ENCODE measurements at regions of chr3 and their contacts with region 1.

Region 1: GRCh38 chr3:194682694-194683310 is 2.9 kb upstream of the FAM43A start:
- DNase-seq: peak; percentile 40 to 83
- ATAC-seq: peak; percentile 19 to 74 (median 62)
- H3K4me3 ChIP-seq: no peak overlapping the region
- H3K27ac ChIP-seq: peak overlapping the region in 6 of 10 donors; percentile 12 to 54 (median 41)
- H3K4me1 ChIP-seq: peaks cover 10 to 39% (median 29%) of the 10 kb centered on the region in 9 donors
- H3K27me3 ChIP-seq: no peaks in the 10 kb centered on the region
- CTCF ChIP-seq: peak; percentile 67 to 96 (median 91)

Region 2: GRCh38 chr3:194738254-194739093 is 55.7 kb after region 1 on chr3:
- intact Hi-C with region 1: loop called in 1 of 10 experiments (anchors 5 kb)
- DNase-seq: peak; percentile 75 to 79
- ATAC-seq: peak; percentile 89 to 98 (median 96)
- H3K4me3 ChIP-seq: no peak overlapping the region
- H3K27ac ChIP-seq: peak overlapping the region in 6 of 10 donors; percentile 17 to 59 (median 42)
- H3K4me1 ChIP-seq: peaks cover 5 to 46% (median 28%) of the 10 kb centered on the region in 9 donors
- H3K27me3 ChIP-seq: no peaks in the 10 kb centered on the region
- CTCF ChIP-seq: no peak

Region 3: DNA sequence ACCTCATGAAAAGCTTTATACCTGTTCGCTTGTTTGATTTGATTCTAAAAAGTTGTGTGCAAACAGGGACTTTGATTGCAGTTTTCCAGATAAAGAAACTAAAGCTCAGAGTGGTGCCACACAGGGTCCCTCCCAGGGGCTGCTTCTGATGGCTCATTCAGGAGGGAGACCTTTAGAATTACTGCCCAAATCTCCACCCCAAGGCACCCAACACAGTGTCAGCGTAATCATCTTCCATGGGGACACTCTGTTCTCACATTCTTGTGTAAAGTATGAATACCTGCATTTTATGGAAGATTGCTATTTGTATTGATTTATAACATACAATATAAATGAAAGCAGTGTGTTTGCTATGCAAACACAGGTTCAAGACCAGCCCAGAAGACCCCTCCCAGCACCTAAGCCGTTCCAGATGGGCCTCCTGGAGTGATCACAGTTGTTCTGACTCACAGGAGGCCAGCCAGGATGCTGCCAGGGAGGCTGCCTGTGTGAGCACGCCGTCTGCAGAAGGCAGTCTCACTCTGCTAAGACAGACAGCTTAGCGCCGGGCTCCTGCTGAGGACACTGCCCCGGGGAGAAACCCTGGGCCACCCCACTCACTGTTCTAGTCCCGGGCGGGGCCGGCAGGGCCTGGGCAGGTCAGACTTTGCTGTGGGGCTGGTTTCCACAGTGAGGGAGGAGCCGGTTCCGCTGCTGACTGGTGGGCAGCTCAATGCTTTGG is 188.5 kb after region 1 on chr3:
- intact Hi-C with region 1: loop called in 6 of 10 experiments (anchors 5 to 10 kb)
- DNase-seq: peak in 1 of 2 donors; percentile 61
- ATAC-seq: peak; percentile 49 to 76 (median 70)
- H3K4me3 ChIP-seq: no peak overlapping the region
- H3K27ac ChIP-seq: peak overlapping the region in 9 of 10 donors; percentile 40 to 83 (median 75)
- H3K4me1 ChIP-seq: peaks cover 18 to 58% (median 45%) of the 10 kb centered on the region in 9 donors
- H3K27me3 ChIP-seq: no peaks in the 10 kb centered on the region
- CTCF ChIP-seq: peak in 2 of 9 donors; percentile 10 to 18

Region 4: GRCh38 chr3:194952841-194953241 is 270.0 kb after region 1 on chr3:
- intact Hi-C with region 1: loop called in 6 of 10 experiments (anchors 2 to 10 kb)
- DNase-seq: peak in 1 of 2 donors; percentile 48
- ATAC-seq: peak; percentile 52 to 84 (median 76)
- H3K4me3 ChIP-seq: no peak overlapping the region
- H3K27ac ChIP-seq: peak overlapping the region in 9 of 10 donors; percentile 24 to 81 (median 49)
- H3K4me1 ChIP-seq: peaks cover 7 to 47% (median 24%) of the 10 kb centered on the region in 9 donors
- H3K27me3 ChIP-seq: no peaks in the 10 kb centered on the region
- CTCF ChIP-seq: no peak

Region 5: DNA sequence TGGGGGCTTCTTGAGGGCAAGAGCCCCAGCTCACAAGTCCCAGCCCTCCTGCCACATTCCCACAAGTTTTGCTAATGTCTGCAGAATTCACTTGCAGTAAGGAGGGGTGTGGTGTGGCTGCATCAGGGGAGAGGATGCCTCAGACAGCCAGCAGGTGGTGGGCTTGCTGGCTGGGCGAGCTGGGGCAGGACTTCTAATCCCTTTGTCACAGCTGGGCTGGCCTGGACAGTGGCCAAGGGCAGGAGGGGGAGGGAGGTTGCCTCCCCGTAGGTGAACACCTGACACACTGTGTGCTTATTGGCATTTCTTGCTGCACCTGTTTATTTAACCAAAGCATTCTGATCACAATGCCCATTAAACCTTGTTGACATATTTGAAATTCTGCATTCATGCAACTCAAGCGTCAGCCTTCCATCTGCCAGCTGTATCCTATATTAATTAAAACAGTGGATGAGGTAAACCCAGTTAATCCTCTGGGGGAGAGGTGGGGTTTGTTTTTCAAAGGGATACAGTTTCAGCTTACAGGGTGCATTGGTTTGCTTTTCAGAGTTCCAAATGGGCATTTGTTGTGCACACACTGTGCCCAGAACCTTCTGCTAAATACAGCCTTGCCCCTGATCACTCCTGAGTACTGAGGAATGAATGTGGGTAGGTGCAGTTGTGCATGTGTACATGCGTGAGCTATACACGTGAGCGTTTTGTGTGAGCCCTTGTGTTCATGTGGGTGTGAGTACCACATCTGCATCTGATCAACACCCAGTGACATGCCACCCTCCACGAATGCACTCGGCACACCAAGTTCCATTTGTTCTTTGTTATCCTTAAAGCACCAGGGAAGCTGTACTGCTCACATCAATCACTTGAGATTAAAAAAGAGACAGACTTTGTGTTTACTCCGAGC is 319.4 kb after region 1 on chr3:
- intact Hi-C with region 1: loop called in 3 of 10 experiments (anchors 5 to 10 kb)
- DNase-seq: peak; percentile 57 to 72
- ATAC-seq: peak; percentile 64 to 84 (median 80)
- H3K4me3 ChIP-seq: no peak overlapping the region
- H3K27ac ChIP-seq: peak overlapping the region in 6 of 10 donors; percentile 2 to 71 (median 51)
- H3K4me1 ChIP-seq: peaks cover 2 to 26% (median 10%) of the 10 kb centered on the region in 9 donors
- H3K27me3 ChIP-seq: no peaks in the 10 kb centered on the region
- CTCF ChIP-seq: peak; percentile 54 to 74 (median 66)

Region 6: GRCh38 chr3:195259475-195260279 is 576.9 kb after region 1 on chr3:
- intact Hi-C with region 1: loop called (anchors 1 to 5 kb)
- DNase-seq: peak; percentile 88 to 93
- ATAC-seq: peak; percentile 78 to 92 (median 86)
- H3K4me3 ChIP-seq: peak overlapping the region; percentile 47 to 84 (median 70)
- H3K27ac ChIP-seq: peak overlapping the region; percentile 74 to 98 (median 92)
- H3K4me1 ChIP-seq: peaks cover 15 to 44% (median 30%) of the 10 kb centered on the region in 9 donors
- H3K27me3 ChIP-seq: no peaks in the 10 kb centered on the region
- CTCF ChIP-seq: peak in 8 of 9 donors; percentile 37 to 99 (median 78)

Measured in heart right ventricle (tissue), 16 donors.